Panc1 (cell line): ENCODE measurements at regions of chr1 and their contacts with region 1.

Region 1: DNA sequence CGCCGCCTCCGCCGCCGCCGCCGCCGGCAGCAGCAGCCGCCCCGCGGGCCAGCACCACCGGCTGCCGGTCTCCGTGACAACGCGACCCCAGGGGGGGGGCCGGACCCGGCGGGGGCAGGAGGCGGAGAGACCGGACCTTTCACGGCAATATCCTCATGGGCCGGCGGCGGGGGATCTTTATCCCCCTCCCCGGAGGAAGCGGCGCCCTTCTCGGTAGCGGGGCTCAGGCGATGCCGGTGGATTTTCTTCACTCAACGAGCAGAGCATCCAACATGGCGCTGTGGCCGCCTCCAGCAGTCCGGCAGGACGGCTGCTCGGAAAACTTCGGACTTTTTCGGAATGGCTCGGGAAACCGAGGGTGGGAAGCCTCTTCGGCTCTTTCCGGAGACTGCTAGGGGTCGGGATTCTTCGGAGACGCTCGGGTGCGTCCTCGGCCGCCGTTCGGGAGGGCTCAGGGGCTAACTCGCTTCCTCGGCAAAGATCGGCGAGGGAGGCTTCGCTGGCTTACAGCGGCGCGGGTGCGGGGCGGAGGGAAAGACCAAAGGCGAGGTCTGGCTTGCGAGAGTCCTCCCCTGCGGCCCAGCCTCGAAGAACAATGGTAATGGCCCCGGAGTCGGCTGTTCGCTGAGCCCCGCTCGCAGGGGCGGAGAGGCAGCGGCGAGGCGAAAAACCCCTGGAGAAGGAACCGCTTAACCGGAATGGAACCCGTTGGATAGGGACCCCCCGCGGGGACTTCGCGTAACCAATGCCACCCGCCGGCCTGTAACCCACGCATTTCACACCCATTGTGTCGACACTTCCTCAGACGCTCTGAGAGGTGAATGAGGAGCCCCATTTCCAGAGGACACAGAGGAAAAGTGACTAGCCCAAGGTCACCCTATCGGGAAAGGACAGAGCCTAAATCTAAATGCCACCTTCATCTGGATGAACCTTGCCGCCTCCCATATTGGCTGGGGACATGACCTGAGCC is at the start of gene EIF4G3:
- DNase-seq: peak; percentile 91
- ATAC-seq: peak; percentile 97
- H3K4me3 ChIP-seq: peak within 1 kb of the TSS; percentile 93 to 94
- H3K27ac ChIP-seq: peak within 1 kb of the TSS; percentile 94
- H3K4me1 ChIP-seq: peaks cover 10% of the 10 kb centered on the region; the same call in 1 of the 2 replicates
- H3K27me3 ChIP-seq: no peaks in the 10 kb centered on the region
- CTCF ChIP-seq: no peak
- total RNA-seq, gene EIF4G3: 78.6 TPM

Region 2: GRCh38 chr1:20821466-20821865 is 355.4 kb before region 1 on chr1:
- CTCF ChIA-PET with region 1: no interaction called
- POLR2A ChIA-PET with region 1: interaction called, 10 read pairs
- in situ Hi-C with region 1: no loop called
- intact Hi-C with region 1: no loop called
- DNase-seq: no peak
- ATAC-seq: no peak
- H3K4me3 ChIP-seq: no peak overlapping the region
- H3K27ac ChIP-seq: no peak overlapping the region
- H3K4me1 ChIP-seq: no peaks in the 10 kb centered on the region
- H3K27me3 ChIP-seq: no peaks in the 10 kb centered on the region
- CTCF ChIP-seq: no peak

Region 3: GRCh38 chr1:20949871-20950590 is 226.8 kb before region 1 on chr1:
- CTCF ChIA-PET with region 1: no interaction called
- POLR2A ChIA-PET with region 1: interaction called, 13 read pairs
- in situ Hi-C with region 1: no loop called
- intact Hi-C with region 1: no loop called
- DNase-seq: no peak
- ATAC-seq: no peak
- H3K4me3 ChIP-seq: no peak overlapping the region
- H3K27ac ChIP-seq: no peak overlapping the region
- H3K4me1 ChIP-seq: no peaks in the 10 kb centered on the region
- H3K27me3 ChIP-seq: no peaks in the 10 kb centered on the region
- CTCF ChIP-seq: no peak

Region 4: GRCh38 chr1:21139601-21140000 is 37.3 kb before region 1 on chr1:
- CTCF ChIA-PET with region 1: no interaction called
- POLR2A ChIA-PET with region 1: interaction called, 11 read pairs
- in situ Hi-C with region 1: no loop called
- intact Hi-C with region 1: no loop called
- DNase-seq: no peak
- ATAC-seq: no peak
- H3K4me3 ChIP-seq: no peak overlapping the region
- H3K27ac ChIP-seq: no peak overlapping the region
- H3K4me1 ChIP-seq: no peaks in the 10 kb centered on the region
- H3K27me3 ChIP-seq: no peaks in the 10 kb centered on the region
- CTCF ChIP-seq: no peak

Region 5: GRCh38 chr1:21189906-21190500 is 13.1 kb after region 1 on chr1:
- CTCF ChIA-PET with region 1: interaction called, 10 read pairs
- POLR2A ChIA-PET with region 1: no interaction called
- in situ Hi-C with region 1: no loop called
- intact Hi-C with region 1: no loop called
- DNase-seq: no peak
- ATAC-seq: no peak
- H3K4me3 ChIP-seq: no peak overlapping the region
- H3K27ac ChIP-seq: no peak overlapping the region
- H3K4me1 ChIP-seq: no peaks in the 10 kb centered on the region
- H3K27me3 ChIP-seq: no peaks in the 10 kb centered on the region
- CTCF ChIP-seq: no peak